T-cell (primary cell): ENCODE measurements at regions of chr5 and their contacts with region 1.

Region 1: DNA sequence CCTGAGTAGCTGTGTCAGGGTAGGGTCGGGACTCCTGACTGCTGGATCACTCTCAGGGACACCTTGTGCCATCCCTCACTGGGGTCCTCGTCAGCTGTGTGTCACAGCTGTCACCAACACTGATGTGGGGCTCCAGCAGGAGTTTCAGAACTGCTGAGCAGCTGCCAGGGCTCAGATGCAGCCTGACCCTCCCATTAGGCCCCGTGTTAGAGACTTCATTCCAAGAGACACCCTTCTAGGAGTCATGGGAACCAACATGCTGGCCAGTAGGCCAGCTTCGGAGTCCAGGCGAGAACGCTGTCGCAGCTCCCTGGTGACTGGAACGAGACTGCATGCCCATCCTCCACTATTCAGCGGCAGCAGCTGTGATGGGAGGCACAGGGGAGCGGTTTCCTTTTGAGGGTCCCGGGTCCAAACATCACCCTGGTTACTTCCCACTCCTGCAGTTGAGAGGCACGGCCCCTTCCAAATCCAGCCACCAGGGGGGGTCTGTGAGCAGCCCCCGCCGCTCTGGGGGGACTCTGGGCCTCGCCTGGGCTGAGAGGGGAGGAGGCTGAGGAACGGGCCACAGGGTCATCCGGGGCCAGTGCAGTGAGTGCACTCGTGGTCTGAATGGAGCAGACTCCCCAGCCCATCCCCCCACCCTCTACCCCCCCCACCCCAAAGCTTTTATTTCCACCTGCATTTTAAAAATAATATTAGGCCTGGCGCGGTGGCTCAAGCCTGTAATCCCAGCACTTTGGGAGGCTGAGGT is 12.6 kb upstream of the TCF7 start:
- DNase-seq: peak in 33 of 35 experiments; percentile 39 to 84 (median 68)
- ATAC-seq: peak; percentile 10 to 33 (median 26)
- H3K4me3 ChIP-seq: no peak overlapping the region
- H3K4me3 Mint-ChIP-seq: peak overlapping the region in 1 of 3 donors; percentile 61
- H3K27ac ChIP-seq: peak overlapping the region; percentile 62
- H3K27ac Mint-ChIP-seq: peak overlapping the region; percentile 97 to 98
- H3K4me1 ChIP-seq: peaks cover 71 to 100% of the 10 kb centered on the region in 2 experiments
- H3K4me1 Mint-ChIP-seq: peaks cover 89 to 95% (median 91%) of the 10 kb centered on the region in 3 donors
- H3K27me3 ChIP-seq: no peaks in the 10 kb centered on the region
- H3K27me3 Mint-ChIP-seq: no peaks in the 10 kb centered on the region

Region 2: GRCh38 chr5:133996683-133997252 is 105.1 kb before region 1 on chr5:
- CTCF ChIA-PET with region 1: no interaction called
- POLR2A ChIA-PET with region 1: no interaction called
- DNase-seq: peak in 3 of 35 experiments; percentile 19 to 42 (median 33)
- ATAC-seq: peak in 1 of 4 experiments; percentile 33
- H3K4me3 ChIP-seq: no peak overlapping the region
- H3K4me3 Mint-ChIP-seq: no peak overlapping the region
- H3K27ac ChIP-seq: no peak overlapping the region
- H3K27ac Mint-ChIP-seq: no peak overlapping the region
- H3K4me1 ChIP-seq: peaks cover 0 to 51% of the 10 kb centered on the region in 2 experiments
- H3K4me1 Mint-ChIP-seq: peaks cover 70 to 78% (median 72%) of the 10 kb centered on the region in 3 donors
- H3K27me3 ChIP-seq: no peaks in the 10 kb centered on the region
- H3K27me3 Mint-ChIP-seq: no peaks in the 10 kb centered on the region

Region 3: GRCh38 chr5:134083517-134083916 is 18.3 kb before region 1 on chr5:
- CTCF ChIA-PET with region 1: interaction called, 4 to 12 read pairs
- POLR2A ChIA-PET with region 1: interaction called, 4 to 5 read pairs
- DNase-seq: no peak
- ATAC-seq: no peak
- H3K4me3 ChIP-seq: no peak overlapping the region
- H3K4me3 Mint-ChIP-seq: peak overlapping the region in 1 of 3 donors; percentile 12
- H3K27ac ChIP-seq: no peak overlapping the region
- H3K27ac Mint-ChIP-seq: peak overlapping the region; percentile 69 to 70
- H3K4me1 ChIP-seq: peaks cover 46 to 79% of the 10 kb centered on the region in 2 experiments
- H3K4me1 Mint-ChIP-seq: peaks cover 78 to 87% (median 85%) of the 10 kb centered on the region in 3 donors
- H3K27me3 ChIP-seq: no peaks in the 10 kb centered on the region
- H3K27me3 Mint-ChIP-seq: no peaks in the 10 kb centered on the region

Region 4: GRCh38 chr5:134111741-134112647 is 10.1 kb after region 1 on chr5:
- CTCF ChIA-PET with region 1: interaction called, 21 to 43 read pairs
- POLR2A ChIA-PET with region 1: interaction called, 6 to 12 read pairs
- DNase-seq: peak in 4 of 35 experiments; percentile 23 to 75 (median 40)
- ATAC-seq: peak in 3 of 4 experiments; percentile 6 to 26 (median 8)
- H3K4me3 ChIP-seq: peak overlapping the region; percentile 56 to 88
- H3K4me3 Mint-ChIP-seq: peak overlapping the region; percentile 93 to 94 (median 94)
- H3K27ac ChIP-seq: peak overlapping the region; percentile 62
- H3K27ac Mint-ChIP-seq: peak overlapping the region; percentile 87 to 94
- H3K4me1 ChIP-seq: peaks cover 39 to 79% of the 10 kb centered on the region in 2 experiments
- H3K4me1 Mint-ChIP-seq: peaks cover 59 to 68% (median 66%) of the 10 kb centered on the region in 3 donors
- H3K27me3 ChIP-seq: peaks cover 0 to 4% of the 10 kb centered on the region in 2 experiments
- H3K27me3 Mint-ChIP-seq: no peaks in the 10 kb centered on the region

Region 5: DNA sequence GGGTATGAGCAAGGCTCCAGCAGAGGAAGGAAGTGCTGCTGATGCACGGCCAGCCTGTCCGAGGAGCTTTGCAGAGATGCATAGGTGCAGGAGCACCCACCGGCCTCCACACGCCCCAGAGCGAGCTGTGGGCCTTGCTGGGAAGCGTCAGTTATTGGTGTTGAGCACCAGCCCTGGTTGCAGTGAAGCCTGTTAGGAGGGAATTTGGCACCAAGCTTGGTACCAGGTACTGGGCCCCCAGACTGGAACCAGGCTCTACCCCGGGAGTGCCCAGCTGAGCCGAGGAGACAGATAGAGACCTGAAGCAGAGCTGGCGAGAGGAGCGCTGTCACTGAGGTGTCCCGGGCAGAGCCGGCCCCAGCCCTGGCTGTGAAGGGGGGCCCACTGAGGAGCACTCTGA is 17.9 kb after region 1 on chr5:
- CTCF ChIA-PET with region 1: interaction called, 4 to 12 read pairs
- POLR2A ChIA-PET with region 1: interaction called, 6 read pairs
- DNase-seq: peak in 1 of 35 experiments; percentile 52
- ATAC-seq: no peak
- H3K4me3 ChIP-seq: peak overlapping the region; percentile 91 to 93
- H3K4me3 Mint-ChIP-seq: peak overlapping the region; percentile 88 to 99 (median 92)
- H3K27ac ChIP-seq: peak overlapping the region; percentile 62
- H3K27ac Mint-ChIP-seq: peak overlapping the region; percentile 92 to 97
- H3K4me1 ChIP-seq: peaks cover 26 to 81% of the 10 kb centered on the region in 2 experiments
- H3K4me1 Mint-ChIP-seq: peaks cover 45 to 79% (median 76%) of the 10 kb centered on the region in 3 donors
- H3K27me3 ChIP-seq: no peaks in the 10 kb centered on the region
- H3K27me3 Mint-ChIP-seq: no peaks in the 10 kb centered on the region

Region 6: GRCh38 chr5:134140530-134141201 is 38.8 kb after region 1 on chr5:
- CTCF ChIA-PET with region 1: interaction called, 16 to 34 read pairs
- POLR2A ChIA-PET with region 1: interaction called, 3 to 4 read pairs
- DNase-seq: peak in 29 of 35 experiments; percentile 36 to 80 (median 53)
- ATAC-seq: peak; percentile 31 to 43 (median 37)
- H3K4me3 ChIP-seq: no peak overlapping the region
- H3K4me3 Mint-ChIP-seq: peak overlapping the region in 1 of 3 donors; percentile 23
- H3K27ac ChIP-seq: peak overlapping the region; percentile 95
- H3K27ac Mint-ChIP-seq: peak overlapping the region; percentile 92 to 97
- H3K4me1 ChIP-seq: peaks cover 28 to 76% of the 10 kb centered on the region in 2 experiments
- H3K4me1 Mint-ChIP-seq: peaks cover 71 to 83% (median 74%) of the 10 kb centered on the region in 3 donors
- H3K27me3 ChIP-seq: no peaks in the 10 kb centered on the region
- H3K27me3 Mint-ChIP-seq: no peaks in the 10 kb centered on the region